ENCODE measurements at regions of chr2 and their contacts with region 1.

Region 1: GRCh38 chr2:191637182-191638078 is 40.5 kb upstream of the NABP1 start:
- DNase-seq: peak; percentile 28
- ATAC-seq: peak; percentile 83
- H3K4me3 Mint-ChIP-seq: peak overlapping the region; percentile 9
- H3K27ac Mint-ChIP-seq: peak overlapping the region; percentile 87
- H3K4me1 Mint-ChIP-seq: peaks cover 50% of the 10 kb centered on the region
- H3K27me3 Mint-ChIP-seq: no peaks in the 10 kb centered on the region
- CTCF ChIP-seq: no peak

Region 2: GRCh38 chr2:191245046-191245868 is 392.2 kb before region 1 on chr2 and contains the start of gene MYO1B:
- CTCF ChIA-PET with region 1: no interaction called
- POLR2A ChIA-PET with region 1: no interaction called
- intact Hi-C with region 1: no loop called
- DNase-seq: peak; percentile 78
- ATAC-seq: peak; percentile 83
- H3K4me3 Mint-ChIP-seq: peak within 1 kb of the TSS; percentile 83
- H3K27ac Mint-ChIP-seq: peak within 1 kb of the TSS; percentile 67
- H3K4me1 Mint-ChIP-seq: peaks cover 18% of the 10 kb centered on the region
- H3K27me3 Mint-ChIP-seq: peaks cover 6% of the 10 kb centered on the region
- CTCF ChIP-seq: peak; percentile 52
- total RNA-seq, gene MYO1B: 43.2 to 44.8 TPM

Region 3: GRCh38 chr2:191274413-191274815 is 363.0 kb before region 1 on chr2:
- CTCF ChIA-PET with region 1: no interaction called
- POLR2A ChIA-PET with region 1: no interaction called
- intact Hi-C with region 1: no loop called
- DNase-seq: no peak
- ATAC-seq: no peak
- H3K4me3 Mint-ChIP-seq: no peak overlapping the region
- H3K27ac Mint-ChIP-seq: no peak overlapping the region
- H3K4me1 Mint-ChIP-seq: no peaks in the 10 kb centered on the region
- H3K27me3 Mint-ChIP-seq: peaks cover 3% of the 10 kb centered on the region
- CTCF ChIP-seq: no peak

Region 4: DNA sequence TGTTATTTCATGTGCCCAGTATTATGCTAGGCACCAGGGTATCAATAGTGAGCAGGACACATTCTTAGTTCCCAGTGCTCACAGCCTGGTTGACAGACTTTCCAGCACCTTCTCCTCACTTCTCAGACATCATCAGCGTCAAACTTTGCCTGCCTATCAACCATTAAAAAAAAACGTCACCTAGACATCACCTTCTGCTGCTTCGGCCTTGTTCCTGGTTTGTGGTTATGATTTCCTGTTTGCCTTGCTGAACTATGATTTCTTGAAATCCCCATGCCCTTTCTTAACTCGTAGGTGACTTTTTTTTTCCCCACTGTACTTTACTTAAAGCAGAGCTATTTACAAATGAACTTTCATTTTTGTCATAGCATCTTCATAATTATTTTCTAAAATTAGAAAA is 19.9 kb before region 1 on chr2:
- CTCF ChIA-PET with region 1: interaction called, 9 read pairs
- POLR2A ChIA-PET with region 1: interaction called, 11 read pairs
- intact Hi-C with region 1: no loop called
- DNase-seq: peak; percentile 65
- ATAC-seq: peak; percentile 85
- H3K4me3 Mint-ChIP-seq: peak overlapping the region; percentile 18
- H3K27ac Mint-ChIP-seq: peak overlapping the region; percentile 99
- H3K4me1 Mint-ChIP-seq: peaks cover 60% of the 10 kb centered on the region
- H3K27me3 Mint-ChIP-seq: no peaks in the 10 kb centered on the region
- CTCF ChIP-seq: no peak

Region 5: GRCh38 chr2:191625016-191625415 is 12.4 kb before region 1 on chr2:
- CTCF ChIA-PET with region 1: interaction called, 20 read pairs
- POLR2A ChIA-PET with region 1: interaction called, 4 read pairs
- intact Hi-C with region 1: no loop called
- DNase-seq: peak; percentile 55
- ATAC-seq: peak; percentile 76
- H3K4me3 Mint-ChIP-seq: no peak overlapping the region
- H3K27ac Mint-ChIP-seq: peak overlapping the region; percentile 73
- H3K4me1 Mint-ChIP-seq: peaks cover 54% of the 10 kb centered on the region
- H3K27me3 Mint-ChIP-seq: no peaks in the 10 kb centered on the region
- CTCF ChIP-seq: no peak

Region 6: DNA sequence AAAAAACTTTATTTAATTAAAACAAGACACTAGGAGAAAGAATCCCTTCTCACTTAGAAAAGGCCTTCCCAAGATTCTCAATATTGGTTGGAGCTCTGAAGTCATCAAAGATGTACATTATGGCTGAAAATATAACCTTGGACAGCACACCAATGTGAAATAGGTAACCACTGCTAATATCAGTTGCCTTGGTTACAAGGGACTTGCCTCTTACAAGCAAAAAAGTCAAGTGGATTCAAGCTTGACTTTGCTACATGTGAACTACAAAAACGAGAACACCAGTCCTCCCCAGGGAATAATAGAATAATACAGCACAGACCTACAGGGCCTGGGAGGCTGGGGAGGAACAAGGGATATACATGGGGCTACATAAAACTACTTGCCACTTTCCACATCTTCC is 86.6 kb after region 1 on chr2:
- CTCF ChIA-PET with region 1: no interaction called
- POLR2A ChIA-PET with region 1: no interaction called
- intact Hi-C with region 1: no loop called
- DNase-seq: no peak
- ATAC-seq: no peak
- H3K4me3 Mint-ChIP-seq: no peak overlapping the region
- H3K27ac Mint-ChIP-seq: no peak overlapping the region
- H3K4me1 Mint-ChIP-seq: peaks cover 1% of the 10 kb centered on the region
- H3K27me3 Mint-ChIP-seq: no peaks in the 10 kb centered on the region
- CTCF ChIP-seq: no peak

Region 7: DNA sequence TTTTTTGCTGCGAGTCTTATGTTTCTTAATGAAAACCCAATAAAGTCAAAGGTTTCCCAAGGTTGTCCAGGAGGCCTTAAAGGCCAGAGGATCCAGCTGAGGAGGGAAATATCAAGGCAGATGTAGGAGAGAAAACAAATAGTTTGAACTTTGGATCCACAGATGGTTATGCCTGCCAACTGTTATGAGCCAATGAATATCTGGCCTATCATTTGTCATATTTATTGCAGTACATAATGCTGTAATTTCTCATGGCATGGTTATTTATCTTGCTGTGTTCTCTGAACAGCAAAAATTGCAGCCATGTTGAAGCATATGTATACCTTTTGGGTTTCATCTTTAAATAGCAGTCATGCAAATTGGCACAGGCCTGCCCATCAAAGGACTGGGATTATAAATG is 247.7 kb after region 1 on chr2:
- CTCF ChIA-PET with region 1: no interaction called
- POLR2A ChIA-PET with region 1: no interaction called
- intact Hi-C with region 1: no loop called
- DNase-seq: no peak
- ATAC-seq: no peak
- H3K4me3 Mint-ChIP-seq: no peak overlapping the region
- H3K27ac Mint-ChIP-seq: no peak overlapping the region
- H3K4me1 Mint-ChIP-seq: no peaks in the 10 kb centered on the region
- H3K27me3 Mint-ChIP-seq: no peaks in the 10 kb centered on the region
- CTCF ChIP-seq: no peak

Measured in activated CD8-positive, alpha-beta T cell treated with anti-CD3 and anti-CD28 coated beads for 36 hours (primary cell).